Activated CD4-positive, alpha-beta memory T cell treated with anti-CD3 and anti-CD28 coated beads for 36 hours (primary cell): ENCODE measurements at regions of chrX and their contacts with region 1.

Region 1: GRCh38 chrX:48801280-48802088 is at the start of gene HDAC6:
- DNase-seq: peak; percentile 97
- H3K4me3 Mint-ChIP-seq: peak within 1 kb of the TSS; percentile 95
- H3K27ac Mint-ChIP-seq: peak within 1 kb of the TSS; percentile 99
- H3K4me1 Mint-ChIP-seq: peaks cover 16% of the 10 kb centered on the region
- H3K27me3 Mint-ChIP-seq: no peaks in the 10 kb centered on the region
- total RNA-seq, gene HDAC6: 71.8 to 81.9 TPM

Region 2: GRCh38 chrX:48676106-48676892 is 125.2 kb before region 1 on chrX:
- CTCF ChIA-PET with region 1: no interaction called
- POLR2A ChIA-PET with region 1: interaction called, 4 read pairs
- intact Hi-C with region 1: loop called (anchors 5 kb)
- DNase-seq: peak; percentile 93
- H3K4me3 Mint-ChIP-seq: peak overlapping the region; percentile 90
- H3K27ac Mint-ChIP-seq: peak overlapping the region; percentile 93
- H3K4me1 Mint-ChIP-seq: peaks cover 31% of the 10 kb centered on the region
- H3K27me3 Mint-ChIP-seq: no peaks in the 10 kb centered on the region

Region 3: GRCh38 chrX:48715072-48715471 is 86.4 kb before region 1 on chrX:
- CTCF ChIA-PET with region 1: no interaction called
- POLR2A ChIA-PET with region 1: interaction called, 4 read pairs
- intact Hi-C with region 1: loop called (anchors 1 kb)
- DNase-seq: no peak
- H3K4me3 Mint-ChIP-seq: no peak overlapping the region
- H3K27ac Mint-ChIP-seq: peak overlapping the region; percentile 84
- H3K4me1 Mint-ChIP-seq: peaks cover 79% of the 10 kb centered on the region
- H3K27me3 Mint-ChIP-seq: no peaks in the 10 kb centered on the region

Region 4: GRCh38 chrX:48897621-48898306 is 96.3 kb after region 1 on chrX and contains the starts of genes PQBP1 and TIMM17B:
- CTCF ChIA-PET with region 1: no interaction called
- POLR2A ChIA-PET with region 1: interaction called, 3 read pairs
- intact Hi-C with region 1: loop called (anchors 10 kb)
- DNase-seq: peak; percentile 91
- H3K4me3 Mint-ChIP-seq: peak within 1 kb of the TSS; percentile 79
- H3K27ac Mint-ChIP-seq: peak within 1 kb of the TSS; percentile 88
- H3K4me1 Mint-ChIP-seq: peaks cover 16% of the 10 kb centered on the region
- H3K27me3 Mint-ChIP-seq: no peaks in the 10 kb centered on the region
- total RNA-seq, gene PQBP1: 85.0 to 85.5 TPM
- total RNA-seq, gene TIMM17B: 83.8 to 86.6 TPM

Region 5: DNA sequence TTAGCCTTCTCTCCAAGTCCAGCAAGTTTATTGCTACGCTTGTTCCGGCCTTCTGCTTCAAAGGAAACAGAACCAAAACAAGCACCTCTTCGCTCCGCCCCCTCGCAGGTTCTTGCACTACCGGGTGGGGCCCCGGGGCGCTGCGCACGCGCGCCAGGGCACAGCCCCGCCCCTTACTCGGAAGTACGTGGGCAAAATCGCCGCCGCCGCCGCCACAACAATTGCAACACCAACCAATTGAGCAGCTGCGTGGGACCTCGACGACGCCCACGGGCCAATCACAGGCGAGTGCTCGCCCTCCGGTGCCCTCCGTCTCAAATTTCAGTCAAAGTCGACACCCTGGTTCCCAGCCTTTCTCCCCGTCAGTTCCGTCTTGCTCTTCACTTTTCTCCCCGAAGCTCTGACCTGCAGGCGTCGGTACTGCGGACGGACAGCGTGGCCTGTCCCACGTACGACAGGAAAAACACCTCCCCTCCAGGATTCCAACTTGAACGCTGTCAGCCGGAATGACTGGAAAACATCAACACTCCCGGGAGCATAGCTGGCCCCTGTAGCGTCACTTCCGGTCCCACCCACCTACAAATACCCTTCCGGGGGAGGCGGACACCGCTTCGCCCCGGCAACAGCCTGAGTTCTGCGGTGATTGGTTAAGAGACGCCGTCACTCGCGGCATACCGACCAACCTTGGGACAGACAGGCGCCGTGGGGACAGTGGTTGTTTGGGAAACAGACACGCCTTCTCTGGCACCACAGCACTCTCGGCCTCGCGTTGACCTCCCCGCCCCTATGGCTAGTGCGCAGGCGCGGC is 156.5 kb after region 1 on chrX:
- CTCF ChIA-PET with region 1: no interaction called
- POLR2A ChIA-PET with region 1: no interaction called
- intact Hi-C with region 1: loop called (anchors 5 kb)
- DNase-seq: peak; percentile 95
- H3K4me3 Mint-ChIP-seq: peak overlapping the region; percentile 99
- H3K27ac Mint-ChIP-seq: peak overlapping the region; percentile 100
- H3K4me1 Mint-ChIP-seq: peaks cover 32% of the 10 kb centered on the region
- H3K27me3 Mint-ChIP-seq: no peaks in the 10 kb centered on the region

Region 6: GRCh38 chrX:48972220-48973167 is 171.0 kb after region 1 on chrX:
- CTCF ChIA-PET with region 1: no interaction called
- POLR2A ChIA-PET with region 1: no interaction called
- intact Hi-C with region 1: no loop called
- DNase-seq: peak; percentile 37
- H3K4me3 Mint-ChIP-seq: peak overlapping the region; percentile 35
- H3K27ac Mint-ChIP-seq: no peak overlapping the region
- H3K4me1 Mint-ChIP-seq: peaks cover 16% of the 10 kb centered on the region
- H3K27me3 Mint-ChIP-seq: no peaks in the 10 kb centered on the region

Region 7: DNA sequence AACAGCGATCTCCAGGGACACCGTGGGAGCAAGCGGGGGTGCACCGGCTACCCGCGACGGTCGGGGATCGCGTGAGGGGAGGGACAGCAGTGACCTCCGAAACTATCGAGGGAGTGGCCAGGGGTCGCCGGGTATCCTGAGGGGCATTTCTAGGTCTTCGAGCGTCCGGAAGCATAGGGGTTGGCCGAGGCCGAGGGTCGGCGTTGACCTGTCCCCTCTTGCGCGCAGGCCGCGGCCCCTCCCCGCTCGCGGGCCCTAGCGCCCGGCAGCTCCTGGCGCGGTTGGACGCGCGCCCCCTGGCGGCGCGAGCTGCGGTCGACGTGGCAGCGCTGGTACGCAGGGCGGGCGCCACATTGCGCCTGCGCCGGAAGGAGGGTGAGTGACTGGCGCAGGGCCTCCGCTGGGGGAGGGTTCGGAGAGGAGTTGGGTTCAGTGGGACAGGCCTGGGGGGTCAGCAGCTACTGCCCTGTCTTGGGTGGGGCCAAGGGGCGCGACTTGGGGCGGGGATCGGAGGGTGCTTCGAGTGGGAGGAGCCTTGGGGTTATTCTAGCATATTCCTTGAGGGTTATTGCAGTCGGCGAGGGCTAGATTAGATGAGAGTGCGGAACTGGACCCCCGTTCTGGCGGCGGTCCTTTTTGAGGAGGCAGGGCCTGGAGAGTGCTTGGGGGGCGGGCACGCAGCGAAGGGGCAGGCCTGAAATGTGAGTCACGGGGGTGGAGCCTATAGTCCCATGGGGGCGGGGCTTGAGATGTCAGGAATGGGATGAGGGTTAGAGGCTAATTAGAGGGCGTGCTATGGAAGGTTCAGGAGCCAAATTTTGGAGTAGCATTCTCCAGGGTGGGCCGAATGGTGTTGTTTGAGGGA is 362.3 kb after region 1 on chrX:
- CTCF ChIA-PET with region 1: no interaction called
- POLR2A ChIA-PET with region 1: no interaction called
- intact Hi-C with region 1: loop called (anchors 10 kb)
- DNase-seq: peak; percentile 86
- H3K4me3 Mint-ChIP-seq: peak overlapping the region; percentile 78
- H3K27ac Mint-ChIP-seq: peak overlapping the region; percentile 95
- H3K4me1 Mint-ChIP-seq: peaks cover 24% of the 10 kb centered on the region
- H3K27me3 Mint-ChIP-seq: no peaks in the 10 kb centered on the region